CD8-positive, alpha-beta T cell (primary cell): ENCODE measurements at regions of chr12 and their contacts with region 1.

Region 1: GRCh38 chr12:30746190-30746589 is 8.6 kb downstream of the CAPRIN2 start:
- DNase-seq: no peak
- ATAC-seq: no peak
- H3K4me3 ChIP-seq: no peak overlapping the region
- H3K4me3 Mint-ChIP-seq: no peak overlapping the region
- H3K27ac ChIP-seq: no peak overlapping the region
- H3K27ac Mint-ChIP-seq: no peak overlapping the region
- H3K4me1 ChIP-seq: peaks cover 6% of the 10 kb centered on the region
- H3K4me1 Mint-ChIP-seq: peaks cover 42% of the 10 kb centered on the region
- H3K27me3 ChIP-seq: no peaks in the 10 kb centered on the region
- H3K27me3 Mint-ChIP-seq: no peaks in the 10 kb centered on the region
- CTCF ChIP-seq: no peak

Region 2: DNA sequence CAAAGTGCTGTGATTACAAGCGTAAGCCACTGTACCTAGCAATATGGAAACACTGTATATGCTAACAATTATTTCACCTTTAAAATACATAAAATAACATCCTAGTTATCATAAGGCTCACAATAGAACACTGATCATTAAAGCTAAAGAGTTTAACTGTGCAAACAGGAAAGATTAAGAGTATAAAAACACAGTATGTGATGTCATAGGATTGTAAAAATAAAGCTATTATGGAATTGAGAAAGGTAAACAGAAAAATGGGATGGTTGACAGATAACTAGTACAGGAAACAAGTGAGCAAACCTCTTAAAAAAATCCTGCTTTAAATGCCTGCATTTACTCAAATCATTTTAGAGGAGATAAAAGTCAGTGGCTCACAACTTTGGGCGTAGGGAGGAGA is 39.7 kb before region 1 on chr12:
- CTCF ChIA-PET with region 1: no interaction called
- POLR2A ChIA-PET with region 1: no interaction called
- intact Hi-C with region 1: no loop called
- DNase-seq: no peak
- ATAC-seq: no peak
- H3K4me3 ChIP-seq: no peak overlapping the region
- H3K4me3 Mint-ChIP-seq: no peak overlapping the region
- H3K27ac ChIP-seq: no peak overlapping the region
- H3K27ac Mint-ChIP-seq: no peak overlapping the region
- H3K4me1 ChIP-seq: no peaks in the 10 kb centered on the region
- H3K4me1 Mint-ChIP-seq: no peaks in the 10 kb centered on the region
- H3K27me3 ChIP-seq: no peaks in the 10 kb centered on the region
- H3K27me3 Mint-ChIP-seq: no peaks in the 10 kb centered on the region
- CTCF ChIP-seq: no peak

Region 3: GRCh38 chr12:30839643-30840220 is 93.5 kb after region 1 on chr12:
- CTCF ChIA-PET with region 1: no interaction called
- POLR2A ChIA-PET with region 1: no interaction called
- intact Hi-C with region 1: no loop called
- DNase-seq: no peak
- ATAC-seq: no peak
- H3K4me3 ChIP-seq: no peak overlapping the region
- H3K4me3 Mint-ChIP-seq: no peak overlapping the region
- H3K27ac ChIP-seq: no peak overlapping the region
- H3K27ac Mint-ChIP-seq: no peak overlapping the region
- H3K4me1 ChIP-seq: no peaks in the 10 kb centered on the region
- H3K4me1 Mint-ChIP-seq: peaks cover 3% of the 10 kb centered on the region
- H3K27me3 ChIP-seq: peaks cover 0 to 4% of the 10 kb centered on the region in 2 experiments
- H3K27me3 Mint-ChIP-seq: peaks cover 22% of the 10 kb centered on the region
- CTCF ChIP-seq: no peak

Region 4: DNA sequence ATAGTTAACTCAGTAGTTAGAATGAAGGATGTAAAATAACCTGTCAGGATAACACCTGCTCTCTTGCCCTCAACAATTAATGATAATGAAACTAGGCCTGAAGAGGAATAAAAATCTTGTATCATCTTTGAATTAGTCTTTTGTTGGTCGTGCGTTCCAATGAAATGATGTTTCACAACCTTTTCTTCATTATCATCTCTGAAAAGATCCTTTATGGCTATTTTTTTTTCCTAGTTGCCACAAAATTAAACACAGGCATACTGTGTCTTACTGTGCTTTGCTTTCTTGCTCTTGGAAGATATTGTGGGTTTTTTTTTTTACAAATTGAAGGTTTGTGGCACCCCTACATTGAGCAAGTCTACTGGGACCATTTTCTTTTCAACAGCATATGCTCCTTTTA is 1489.1 kb after region 1 on chr12:
- CTCF ChIA-PET with region 1: no interaction called
- POLR2A ChIA-PET with region 1: no interaction called
- intact Hi-C with region 1: loop called in 1 of 2 experiments (anchors 5 kb)
- DNase-seq: no peak
- ATAC-seq: no peak
- H3K4me3 ChIP-seq: no peak overlapping the region
- H3K4me3 Mint-ChIP-seq: no peak overlapping the region
- H3K27ac ChIP-seq: no peak overlapping the region
- H3K27ac Mint-ChIP-seq: no peak overlapping the region
- H3K4me1 ChIP-seq: no peaks in the 10 kb centered on the region
- H3K4me1 Mint-ChIP-seq: no peaks in the 10 kb centered on the region
- H3K27me3 ChIP-seq: no peaks in the 10 kb centered on the region
- H3K27me3 Mint-ChIP-seq: no peaks in the 10 kb centered on the region
- CTCF ChIP-seq: no peak